ENCODE measurements at regions of chr15 and their contacts with region 1.

Region 1: DNA sequence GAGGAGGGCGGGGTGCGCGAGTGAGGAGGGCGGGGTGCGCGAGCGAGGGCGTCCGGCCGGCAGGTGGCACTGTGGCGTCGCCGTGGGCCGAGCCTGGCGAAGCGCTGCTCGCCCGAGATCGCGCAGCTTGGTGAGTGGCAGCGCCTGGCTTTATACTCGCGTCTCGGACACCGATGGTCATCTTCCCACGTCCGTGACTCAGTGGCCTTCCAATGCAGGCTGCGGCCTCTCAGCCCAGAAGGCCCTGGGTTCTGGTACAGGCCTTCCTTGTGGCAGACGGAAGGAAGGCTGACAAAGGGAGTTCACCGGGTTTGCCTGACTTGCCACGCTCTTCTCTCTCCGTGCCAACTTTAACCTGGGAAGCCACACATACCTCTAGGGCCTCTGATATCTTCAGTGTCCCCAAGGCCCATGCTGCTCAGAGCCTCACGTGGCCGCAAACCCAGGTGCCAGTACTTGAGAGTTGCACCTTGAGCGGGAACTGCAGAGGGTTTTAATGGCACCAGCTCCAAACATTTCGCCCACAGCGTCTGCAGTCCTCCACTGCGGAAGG is 195.3 kb upstream of the LYSMD4 start:
- DNase-seq: peak; percentile 47 to 83
- H3K4me3 ChIP-seq: peak overlapping the region; percentile 69
- H3K27ac ChIP-seq: peak overlapping the region; percentile 40; the same call in 1 of the 2 replicates
- H3K4me1 ChIP-seq: peaks cover 8% of the 10 kb centered on the region
- H3K27me3 ChIP-seq: peaks cover 13% of the 10 kb centered on the region; the same call in 1 of the 2 replicates
- CTCF ChIP-seq: peak; percentile 68

Region 2: GRCh38 chr15:100383302-100384107 is 455.0 kb after region 1 on chr15:
- CTCF ChIA-PET with region 1: no interaction called
- POLR2A ChIA-PET with region 1: no interaction called
- intact Hi-C with region 1: loop called (anchors 2 kb)
- DNase-seq: peak; percentile 27 to 39
- H3K4me3 ChIP-seq: no peak overlapping the region
- H3K27ac ChIP-seq: no peak overlapping the region
- H3K4me1 ChIP-seq: no peaks in the 10 kb centered on the region
- H3K27me3 ChIP-seq: peaks cover 51% of the 10 kb centered on the region
- CTCF ChIP-seq: peak; percentile 77

Region 3: GRCh38 chr15:100572362-100572983 is 644.0 kb after region 1 on chr15:
- CTCF ChIA-PET with region 1: no interaction called
- POLR2A ChIA-PET with region 1: no interaction called
- intact Hi-C with region 1: loop called (anchors 10 kb)
- DNase-seq: no peak
- H3K4me3 ChIP-seq: no peak overlapping the region
- H3K27ac ChIP-seq: no peak overlapping the region
- H3K4me1 ChIP-seq: no peaks in the 10 kb centered on the region
- H3K27me3 ChIP-seq: no peaks in the 10 kb centered on the region
- CTCF ChIP-seq: peak; percentile 75

Region 4: GRCh38 chr15:100602064-100602822 is 673.7 kb after region 1 on chr15 and contains the starts of genes ASB7 and LINS1:
- CTCF ChIA-PET with region 1: no interaction called
- POLR2A ChIA-PET with region 1: no interaction called
- intact Hi-C with region 1: loop called (anchors 10 kb)
- DNase-seq: peak; percentile 99
- H3K4me3 ChIP-seq: peak within 1 kb of the TSS; percentile 86
- H3K27ac ChIP-seq: peak within 1 kb of the TSS; percentile 26
- H3K4me1 ChIP-seq: peaks cover 20% of the 10 kb centered on the region
- H3K27me3 ChIP-seq: no peaks in the 10 kb centered on the region
- CTCF ChIP-seq: no peak
- total RNA-seq, gene ASB7: 17.9 and 19.0 TPM in 2 replicates
- total RNA-seq, gene LINS1: 7.0 and 10.9 TPM in 2 replicates

Measured in PC-9 (cell line).